ENCODE measurements at regions of chr1 and their contacts with region 1.

Region 1: DNA sequence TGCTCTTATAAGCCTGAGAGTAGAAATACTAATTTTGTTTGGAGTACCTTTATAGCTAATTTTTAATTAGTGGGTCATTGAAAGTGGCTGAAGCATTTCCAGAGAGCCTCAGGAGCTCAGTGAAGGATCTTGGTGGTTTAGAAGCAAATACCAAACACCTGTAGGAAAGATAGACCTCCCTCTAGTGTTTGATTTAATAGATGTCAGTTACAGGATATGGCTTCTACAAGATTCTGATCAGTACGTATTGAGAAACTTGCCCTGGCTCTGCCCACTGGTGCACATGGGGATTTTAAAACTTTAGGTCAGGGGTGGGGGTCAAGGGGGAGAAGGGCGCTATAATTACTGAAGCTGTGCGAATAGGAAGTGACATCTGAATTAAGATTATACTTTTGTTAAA is 122.2 kb downstream of the POU2F1 start:
- DNase-seq: peak; percentile 61
- ATAC-seq: peak; percentile 58
- H3K4me3 ChIP-seq: no peak overlapping the region
- H3K4me3 Mint-ChIP-seq: no peak overlapping the region
- H3K27ac ChIP-seq: no peak overlapping the region
- H3K27ac Mint-ChIP-seq: no peak overlapping the region
- H3K4me1 ChIP-seq: peaks cover 4 to 7% of the 10 kb centered on the region in 2 donors
- H3K4me1 Mint-ChIP-seq: peaks cover 17% of the 10 kb centered on the region
- H3K27me3 ChIP-seq: no peaks in the 10 kb centered on the region
- H3K27me3 Mint-ChIP-seq: no peaks in the 10 kb centered on the region
- CTCF ChIP-seq: peak; percentile 68

Region 2: DNA sequence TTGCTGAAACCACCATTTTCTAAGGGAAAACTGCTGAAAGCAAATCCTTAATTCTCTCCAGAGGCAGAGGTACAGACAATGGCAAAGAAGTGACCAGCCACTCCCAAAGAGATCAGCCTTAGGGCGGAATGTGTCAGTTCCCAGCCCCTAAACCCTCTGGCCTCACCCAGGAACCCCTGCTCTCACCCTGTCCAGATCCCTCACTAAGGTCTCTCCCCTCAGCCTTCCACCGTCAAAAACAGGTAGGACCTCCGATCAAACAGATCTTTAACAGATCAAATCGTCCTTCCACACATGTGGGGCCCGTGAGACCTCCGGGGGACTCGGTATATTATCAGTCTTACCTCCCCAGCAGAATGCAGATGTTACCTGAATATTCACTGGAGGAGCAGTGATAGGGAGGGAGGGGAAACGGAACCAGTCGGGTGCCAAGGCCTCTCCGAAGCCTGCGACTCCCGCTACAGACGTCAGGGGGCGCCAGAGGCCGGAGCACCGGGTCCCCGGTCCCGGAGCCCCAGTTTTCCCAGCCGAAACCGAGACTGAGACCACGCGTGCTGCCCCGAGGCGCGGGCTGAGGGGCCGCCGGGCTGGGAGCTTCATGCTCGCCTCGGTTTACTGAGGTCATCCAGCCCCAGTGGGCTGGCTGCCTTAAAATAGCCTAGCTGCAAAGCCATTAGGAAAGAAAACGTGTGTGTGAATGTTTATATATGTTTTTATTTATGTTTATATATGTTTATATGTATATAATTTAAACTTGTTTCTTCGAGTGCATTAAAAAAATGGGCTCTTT is 276.3 kb before region 1 on chr1:
- CTCF ChIA-PET with region 1: interaction called, 6 read pairs
- POLR2A ChIA-PET with region 1: no interaction called
- intact Hi-C with region 1: loop called (anchors 1 kb)
- DNase-seq: peak; percentile 83
- ATAC-seq: peak; percentile 99
- H3K4me3 ChIP-seq: peak overlapping the region in 1 of 5 experiments; percentile 20
- H3K4me3 Mint-ChIP-seq: no peak overlapping the region
- H3K27ac ChIP-seq: no peak overlapping the region
- H3K27ac Mint-ChIP-seq: no peak overlapping the region
- H3K4me1 ChIP-seq: peaks cover 0 to 7% of the 10 kb centered on the region in 2 donors
- H3K4me1 Mint-ChIP-seq: peaks cover 4% of the 10 kb centered on the region
- H3K27me3 ChIP-seq: no peaks in the 10 kb centered on the region
- H3K27me3 Mint-ChIP-seq: no peaks in the 10 kb centered on the region
- CTCF ChIP-seq: peak; percentile 98

Region 3: GRCh38 chr1:167288390-167289074 is 54.3 kb before region 1 on chr1:
- CTCF ChIA-PET with region 1: no interaction called
- POLR2A ChIA-PET with region 1: no interaction called
- intact Hi-C with region 1: no loop called
- DNase-seq: no peak
- ATAC-seq: no peak
- H3K4me3 ChIP-seq: no peak overlapping the region
- H3K4me3 Mint-ChIP-seq: no peak overlapping the region
- H3K27ac ChIP-seq: no peak overlapping the region
- H3K27ac Mint-ChIP-seq: no peak overlapping the region
- H3K4me1 ChIP-seq: peaks cover 0 to 4% of the 10 kb centered on the region in 2 donors
- H3K4me1 Mint-ChIP-seq: peaks cover 32% of the 10 kb centered on the region
- H3K27me3 ChIP-seq: no peaks in the 10 kb centered on the region
- H3K27me3 Mint-ChIP-seq: no peaks in the 10 kb centered on the region
- CTCF ChIP-seq: no peak

Region 4: GRCh38 chr1:167305706-167306277 is 37.1 kb before region 1 on chr1:
- CTCF ChIA-PET with region 1: no interaction called
- POLR2A ChIA-PET with region 1: interaction called, 3 read pairs
- intact Hi-C with region 1: loop called (anchors 5 kb)
- DNase-seq: no peak
- ATAC-seq: no peak
- H3K4me3 ChIP-seq: no peak overlapping the region
- H3K4me3 Mint-ChIP-seq: no peak overlapping the region
- H3K27ac ChIP-seq: no peak overlapping the region
- H3K27ac Mint-ChIP-seq: no peak overlapping the region
- H3K4me1 ChIP-seq: no peaks in the 10 kb centered on the region
- H3K4me1 Mint-ChIP-seq: peaks cover 18% of the 10 kb centered on the region
- H3K27me3 ChIP-seq: no peaks in the 10 kb centered on the region
- H3K27me3 Mint-ChIP-seq: no peaks in the 10 kb centered on the region
- CTCF ChIP-seq: no peak

Region 5: DNA sequence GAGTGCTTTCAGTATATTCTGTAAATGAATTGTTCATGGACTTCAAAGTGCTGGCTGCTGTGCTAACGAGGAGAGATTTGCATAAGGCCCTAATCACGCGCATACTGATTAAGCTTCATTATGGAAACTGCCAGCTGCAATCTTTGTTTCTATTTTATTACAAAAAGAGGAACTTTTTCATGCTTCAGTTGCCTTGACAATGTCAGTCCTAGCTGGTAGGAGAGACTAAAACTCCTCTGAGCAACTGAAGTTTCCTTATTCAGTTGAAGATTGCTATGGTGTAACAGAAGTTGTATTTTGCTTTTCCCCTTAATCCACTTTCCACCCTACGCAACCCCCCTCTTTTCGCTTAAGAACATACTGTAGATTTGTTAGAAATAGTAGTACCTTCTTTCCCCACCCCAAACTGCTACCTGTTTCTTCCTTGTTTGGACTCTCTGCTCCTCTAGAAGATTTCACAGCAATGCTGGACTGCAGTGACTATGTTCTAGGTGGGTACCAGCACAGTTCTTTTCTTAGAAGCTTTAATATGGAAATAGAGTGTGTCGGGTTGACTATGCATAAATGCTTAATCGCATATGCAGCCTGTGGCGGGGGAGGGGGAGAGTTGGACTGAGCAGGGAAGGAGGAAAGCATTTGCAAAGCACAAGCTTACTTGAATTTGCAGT is 13.9 kb before region 1 on chr1:
- CTCF ChIA-PET with region 1: interaction called, 23 read pairs
- POLR2A ChIA-PET with region 1: no interaction called
- intact Hi-C with region 1: no loop called
- DNase-seq: peak; percentile 88
- ATAC-seq: peak; percentile 86
- H3K4me3 ChIP-seq: peak overlapping the region; percentile 46 to 67 (median 62)
- H3K4me3 Mint-ChIP-seq: peak overlapping the region; percentile 78
- H3K27ac ChIP-seq: peak overlapping the region; percentile 85 to 86
- H3K27ac Mint-ChIP-seq: peak overlapping the region; percentile 91
- H3K4me1 ChIP-seq: peaks cover 36 to 54% of the 10 kb centered on the region in 2 donors
- H3K4me1 Mint-ChIP-seq: peaks cover 59% of the 10 kb centered on the region
- H3K27me3 ChIP-seq: no peaks in the 10 kb centered on the region
- H3K27me3 Mint-ChIP-seq: no peaks in the 10 kb centered on the region
- CTCF ChIP-seq: no peak

Region 6: GRCh38 chr1:167357305-167357704 is 14.5 kb after region 1 on chr1:
- CTCF ChIA-PET with region 1: interaction called, 10 read pairs
- POLR2A ChIA-PET with region 1: no interaction called
- intact Hi-C with region 1: no loop called
- DNase-seq: no peak
- ATAC-seq: no peak
- H3K4me3 ChIP-seq: no peak overlapping the region
- H3K4me3 Mint-ChIP-seq: no peak overlapping the region
- H3K27ac ChIP-seq: no peak overlapping the region
- H3K27ac Mint-ChIP-seq: no peak overlapping the region
- H3K4me1 ChIP-seq: peaks cover 3 to 5% of the 10 kb centered on the region in 2 donors
- H3K4me1 Mint-ChIP-seq: peaks cover 44% of the 10 kb centered on the region
- H3K27me3 ChIP-seq: no peaks in the 10 kb centered on the region
- H3K27me3 Mint-ChIP-seq: no peaks in the 10 kb centered on the region
- CTCF ChIP-seq: no peak

Measured in B cell (primary cell).